Heart left ventricle (tissue), 16 donors: ENCODE measurements at regions of chr20 and their contacts with region 1.

Region 1: GRCh38 chr20:10591956-10592521 is 81.8 kb downstream of the JAG1 start:
- DNase-seq: no peak
- ATAC-seq: peak in 2 of 4 donors; percentile 70 to 83
- H3K4me3 ChIP-seq: no peak overlapping the region
- H3K27ac ChIP-seq: peak overlapping the region in 8 of 12 donors; percentile 10 to 67 (median 40)
- H3K4me1 ChIP-seq: peaks cover 0 to 30% (median 9%) of the 10 kb centered on the region in 12 donors
- H3K27me3 ChIP-seq: no peaks in the 10 kb centered on the region
- CTCF ChIP-seq: no peak
- POLR2A ChIP-seq: no peak

Region 2: DNA sequence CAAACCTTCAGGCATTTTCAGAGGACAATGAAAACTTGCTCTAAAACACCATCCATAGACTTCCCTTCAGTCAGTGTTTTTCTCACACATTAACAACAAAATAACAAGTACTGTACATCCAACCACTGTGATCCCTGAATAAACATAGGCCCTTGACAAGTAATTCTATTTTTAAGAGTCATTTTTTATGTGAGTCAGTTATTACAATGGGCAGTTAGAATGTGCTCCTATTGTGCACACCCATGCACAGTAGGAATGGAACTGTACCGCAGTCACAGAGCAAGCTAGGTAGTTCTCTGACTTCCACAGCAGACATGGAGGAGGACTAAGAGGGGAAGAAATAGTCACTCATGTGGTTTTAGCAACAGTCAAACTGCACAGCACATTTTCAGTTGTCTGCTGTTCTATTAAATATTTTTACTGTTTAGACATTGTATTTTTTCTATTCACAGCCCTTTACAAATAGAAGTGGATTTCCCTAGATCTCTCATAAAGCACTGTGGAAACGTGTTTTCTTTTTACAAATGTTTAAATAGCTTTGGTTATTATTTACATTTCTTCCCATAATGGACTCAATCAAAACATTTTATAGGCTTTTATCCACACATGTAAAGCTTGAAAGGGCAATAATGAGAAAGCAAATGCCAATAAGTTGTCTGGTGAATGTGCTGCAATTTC is 18.6 kb before region 1 on chr20:
- intact Hi-C with region 1: loop called in 1 of 10 experiments (anchors 2 kb)
- DNase-seq: no peak
- ATAC-seq: no peak
- H3K4me3 ChIP-seq: no peak overlapping the region
- H3K27ac ChIP-seq: no peak overlapping the region
- H3K4me1 ChIP-seq: peaks cover 0 to 26% (median 0%) of the 10 kb centered on the region in 12 donors
- H3K27me3 ChIP-seq: no peaks in the 10 kb centered on the region
- CTCF ChIP-seq: no peak
- POLR2A ChIP-seq: no peak